ENCODE measurements at regions of chr19 and their contacts with region 1.

Region 1: GRCh38 chr19:36014029-36014924 is at the start of gene ALKBH6:
- DNase-seq: peak; percentile 98 to 99 (median 99)
- ATAC-seq: peak; percentile 98
- H3K4me3 ChIP-seq: peak within 1 kb of the TSS; percentile 73 to 80
- H3K4me3 Mint-ChIP-seq: peak within 1 kb of the TSS; percentile 91
- H3K27ac ChIP-seq: peak within 1 kb of the TSS; percentile 82 to 85
- H3K27ac Mint-ChIP-seq: peak within 1 kb of the TSS; percentile 91
- H3K4me1 ChIP-seq: peaks cover 23% of the 10 kb centered on the region
- H3K4me1 Mint-ChIP-seq: peaks cover 43% of the 10 kb centered on the region
- H3K27me3 ChIP-seq: no peaks in the 10 kb centered on the region
- H3K27me3 Mint-ChIP-seq: no peaks in the 10 kb centered on the region
- CTCF ChIP-seq: no peak
- total RNA-seq, gene ALKBH6: 28.8 to 34.1 TPM

Region 2: DNA sequence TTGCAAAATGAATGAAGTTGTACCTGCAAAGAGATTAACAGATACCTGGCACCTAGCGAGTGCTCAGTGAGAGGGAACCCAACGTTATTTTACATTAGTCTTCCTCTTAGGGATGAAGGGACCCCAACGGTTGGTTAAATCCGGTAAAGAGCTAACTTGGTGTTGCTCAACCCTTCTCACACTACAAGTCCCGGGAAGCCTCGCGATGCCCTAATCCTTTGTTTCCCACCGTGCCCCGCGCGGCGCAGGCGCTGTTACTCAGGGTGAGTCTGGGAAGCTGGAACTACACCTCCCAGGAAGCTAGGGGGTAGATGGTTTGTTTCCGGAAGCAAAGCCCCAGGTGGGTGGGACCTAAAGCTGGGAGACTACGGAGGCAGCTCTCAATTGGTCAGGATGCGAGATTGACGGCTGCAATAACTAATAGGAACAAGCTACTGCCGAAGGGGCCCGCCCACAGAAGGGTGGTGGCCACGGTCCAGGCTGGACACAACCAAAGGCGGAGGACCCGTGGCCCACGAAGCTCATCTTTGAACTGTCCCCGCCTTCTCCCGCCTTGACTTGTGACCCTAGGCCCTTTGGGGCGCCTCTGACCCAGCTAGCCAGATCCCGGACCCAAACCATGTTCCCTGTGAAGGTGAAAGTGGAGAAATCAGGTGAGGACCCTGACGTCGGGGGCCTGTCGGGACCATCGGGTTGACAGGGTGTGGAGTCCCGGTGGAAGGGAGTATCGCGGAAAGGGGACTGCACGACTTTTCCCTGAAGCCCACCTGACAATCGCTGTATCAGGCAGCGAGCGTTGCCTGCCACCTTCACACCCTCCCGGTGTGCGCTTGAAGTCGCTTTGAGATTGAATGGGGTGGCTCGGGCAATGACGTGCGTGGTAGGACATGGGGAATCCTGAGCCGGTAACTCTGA is 265.9 kb before region 1 on chr19 and contains the start of gene LIN37:
- CTCF ChIA-PET with region 1: no interaction called
- POLR2A ChIA-PET with region 1: no interaction called
- intact Hi-C with region 1: loop called in 1 of 2 experiments (anchors 2 kb)
- DNase-seq: peak; percentile 97 to 100 (median 98)
- ATAC-seq: peak; percentile 72
- H3K4me3 ChIP-seq: peak within 1 kb of the TSS; percentile 84 to 99
- H3K4me3 Mint-ChIP-seq: peak within 1 kb of the TSS; percentile 98
- H3K27ac ChIP-seq: peak within 1 kb of the TSS; percentile 71 to 84
- H3K27ac Mint-ChIP-seq: peak within 1 kb of the TSS; percentile 95
- H3K4me1 ChIP-seq: peaks cover 41% of the 10 kb centered on the region
- H3K4me1 Mint-ChIP-seq: peaks cover 44% of the 10 kb centered on the region
- H3K27me3 ChIP-seq: no peaks in the 10 kb centered on the region
- H3K27me3 Mint-ChIP-seq: no peaks in the 10 kb centered on the region
- CTCF ChIP-seq: no peak
- total RNA-seq, gene LIN37: 5.5 to 9.3 TPM

Region 3: DNA sequence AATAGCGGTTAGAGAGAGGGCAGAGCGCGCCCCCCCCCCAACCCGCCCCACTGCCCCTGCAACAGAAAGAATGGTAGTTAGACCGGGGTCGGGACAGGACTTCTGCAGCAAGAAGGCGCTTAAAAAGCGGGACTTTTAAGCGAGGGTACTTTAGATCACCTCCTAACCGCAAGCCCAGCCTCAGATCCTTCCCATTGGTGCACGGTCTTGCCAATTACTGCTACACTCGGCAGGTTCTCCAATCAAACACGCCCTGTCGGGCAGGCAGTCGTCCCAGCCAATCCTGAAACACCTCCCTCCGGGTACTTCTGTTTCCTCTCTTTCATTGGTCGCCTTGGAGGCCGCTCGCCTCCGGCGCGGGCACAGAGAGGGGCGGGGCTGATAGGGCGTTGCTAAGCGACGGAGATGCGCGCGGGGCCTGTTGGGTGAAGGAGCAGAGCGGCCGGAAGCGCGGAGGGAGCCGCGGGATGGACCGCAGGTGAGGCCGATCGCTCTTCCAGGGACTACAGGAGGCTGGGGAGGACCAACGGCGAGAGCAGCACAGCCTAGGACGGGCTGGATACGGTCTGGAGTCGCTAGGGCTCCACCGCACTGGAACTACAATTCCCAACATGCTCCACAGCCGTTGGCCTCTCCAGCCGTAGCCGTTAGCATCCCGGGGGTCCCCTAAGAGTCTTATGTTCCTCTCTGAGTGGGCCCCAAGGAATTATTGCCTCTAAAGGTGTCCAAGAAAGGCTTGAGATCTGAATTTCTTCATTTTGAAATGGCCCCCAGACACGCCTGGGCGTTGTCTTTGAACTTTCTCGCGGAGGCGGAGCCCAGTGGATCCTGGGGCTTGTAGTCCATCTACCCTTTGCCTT is 256.3 kb before region 1 on chr19 and contains the start of gene PROSER3:
- CTCF ChIA-PET with region 1: no interaction called
- POLR2A ChIA-PET with region 1: no interaction called
- intact Hi-C with region 1: loop called in 1 of 2 experiments (anchors 2 kb)
- DNase-seq: peak; percentile 96 to 99 (median 98)
- ATAC-seq: peak; percentile 95
- H3K4me3 ChIP-seq: peak within 1 kb of the TSS; percentile 98 to 100
- H3K4me3 Mint-ChIP-seq: peak within 1 kb of the TSS; percentile 96
- H3K27ac ChIP-seq: peak within 1 kb of the TSS; percentile 95 to 97
- H3K27ac Mint-ChIP-seq: peak within 1 kb of the TSS; percentile 97
- H3K4me1 ChIP-seq: peaks cover 25% of the 10 kb centered on the region
- H3K4me1 Mint-ChIP-seq: peaks cover 34% of the 10 kb centered on the region
- H3K27me3 ChIP-seq: no peaks in the 10 kb centered on the region
- H3K27me3 Mint-ChIP-seq: peaks cover 9% of the 10 kb centered on the region
- CTCF ChIP-seq: no peak
- total RNA-seq, gene PROSER3: 17.3 to 19.5 TPM

Region 4: DNA sequence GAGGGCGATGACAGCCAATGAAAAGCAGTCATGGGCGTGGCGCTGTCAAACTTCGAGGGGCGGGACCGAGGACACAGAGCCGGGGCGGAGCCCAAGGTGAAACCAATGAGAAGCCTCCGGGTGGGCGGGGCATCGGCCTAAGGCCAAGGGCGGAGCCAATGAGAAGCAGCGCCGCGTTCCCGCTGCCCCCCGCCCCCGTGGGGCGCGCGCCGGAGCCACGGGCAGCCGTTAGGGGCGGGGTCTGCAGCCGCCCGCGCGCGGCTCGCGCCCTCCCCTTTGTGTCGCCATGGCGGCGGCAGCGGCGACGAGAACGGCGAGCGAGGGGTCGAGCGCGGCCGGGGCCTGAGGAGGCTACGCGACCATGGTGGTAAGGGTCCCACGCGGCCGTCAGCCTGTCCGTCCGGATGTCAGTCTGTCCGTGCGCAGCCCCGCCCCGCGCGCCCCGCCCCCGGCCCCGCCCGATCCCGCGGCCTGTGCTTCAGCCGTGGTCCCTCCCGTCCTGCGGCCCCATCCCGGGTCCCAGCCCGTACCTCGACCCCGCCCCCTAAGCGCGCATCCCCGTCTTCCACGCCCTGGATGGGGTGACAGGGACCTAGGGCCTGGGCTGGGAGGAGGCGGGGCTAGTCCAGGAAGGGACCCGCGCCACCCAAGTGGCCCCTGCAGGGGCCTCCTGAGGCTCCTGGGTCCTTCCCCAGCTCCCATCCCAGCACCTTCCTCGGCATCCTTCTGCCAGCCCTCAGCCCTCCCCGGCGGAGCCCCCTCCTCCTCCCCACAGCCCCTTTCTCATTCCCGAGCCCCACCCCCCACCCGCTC is 238.8 kb before region 1 on chr19 and contains the start of gene ARHGAP33:
- CTCF ChIA-PET with region 1: no interaction called
- POLR2A ChIA-PET with region 1: no interaction called
- intact Hi-C with region 1: loop called (anchors 1 to 5 kb)
- DNase-seq: peak; percentile 94 to 99 (median 98)
- ATAC-seq: peak; percentile 99
- H3K4me3 ChIP-seq: peak within 1 kb of the TSS; percentile 54 to 60
- H3K4me3 Mint-ChIP-seq: peak within 1 kb of the TSS; percentile 84
- H3K27ac ChIP-seq: no peak within 1 kb of the TSS
- H3K27ac Mint-ChIP-seq: no peak within 1 kb of the TSS
- H3K4me1 ChIP-seq: peaks cover 12% of the 10 kb centered on the region
- H3K4me1 Mint-ChIP-seq: peaks cover 21% of the 10 kb centered on the region
- H3K27me3 ChIP-seq: no peaks in the 10 kb centered on the region
- H3K27me3 Mint-ChIP-seq: no peaks in the 10 kb centered on the region
- CTCF ChIP-seq: no peak
- total RNA-seq, gene ARHGAP33: 8.7 to 10.6 TPM

Region 5: DNA sequence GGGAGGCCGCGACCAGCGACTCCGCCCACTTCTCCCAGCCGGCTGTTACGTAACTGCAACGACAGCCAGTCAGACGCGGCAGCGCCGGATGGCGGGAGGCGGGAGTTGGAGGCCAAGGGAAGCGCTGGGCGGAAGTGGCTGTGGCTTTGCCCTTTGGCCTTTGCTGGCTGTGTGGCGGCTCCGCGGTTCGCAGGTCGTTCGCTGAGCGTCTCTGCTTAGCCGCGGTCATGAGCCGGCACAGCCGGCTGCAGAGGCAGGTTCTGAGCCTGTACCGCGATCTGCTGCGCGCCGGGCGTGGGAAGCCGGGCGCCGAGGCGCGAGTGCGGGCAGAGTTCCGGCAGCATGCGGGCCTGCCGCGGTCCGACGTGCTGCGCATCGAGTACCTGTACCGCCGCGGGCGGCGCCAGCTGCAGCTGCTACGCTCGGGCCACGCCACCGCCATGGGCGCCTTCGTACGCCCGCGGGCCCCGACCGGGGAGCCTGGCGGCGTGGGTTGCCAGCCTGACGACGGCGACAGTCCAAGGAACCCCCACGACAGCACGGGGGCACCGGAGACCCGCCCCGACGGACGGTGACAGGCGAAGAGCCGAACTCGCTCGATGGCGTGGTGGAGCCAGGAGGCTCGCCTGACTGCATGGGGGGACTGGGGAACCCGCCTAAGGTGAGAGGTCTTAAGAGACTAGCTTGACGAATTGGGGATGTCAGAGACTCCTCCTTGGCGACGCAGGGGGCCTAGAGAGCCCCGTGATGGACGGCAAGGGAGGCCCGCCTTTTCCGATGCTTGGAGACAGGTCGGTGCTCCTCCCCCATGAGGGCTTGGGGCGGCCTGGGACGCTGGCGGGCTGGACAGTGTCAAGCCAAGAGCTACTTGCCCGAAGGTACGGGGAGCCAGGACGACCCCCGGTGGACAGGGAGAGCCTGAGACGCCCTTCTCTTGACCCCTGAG is 19.0 kb before region 1 on chr19 and contains the start of gene SDHAF1:
- CTCF ChIA-PET with region 1: interaction called, 4 read pairs
- POLR2A ChIA-PET with region 1: interaction called, 11 read pairs
- intact Hi-C with region 1: loop called (anchors 1 kb)
- DNase-seq: peak; percentile 80 to 96 (median 92)
- ATAC-seq: peak; percentile 88
- H3K4me3 ChIP-seq: peak within 1 kb of the TSS; percentile 73 to 95
- H3K4me3 Mint-ChIP-seq: peak within 1 kb of the TSS; percentile 93
- H3K27ac ChIP-seq: peak within 1 kb of the TSS; percentile 55 to 69
- H3K27ac Mint-ChIP-seq: peak within 1 kb of the TSS; percentile 94
- H3K4me1 ChIP-seq: peaks cover 22% of the 10 kb centered on the region
- H3K4me1 Mint-ChIP-seq: peaks cover 35% of the 10 kb centered on the region
- H3K27me3 ChIP-seq: peaks cover 0 to 4% of the 10 kb centered on the region in 2 experiments
- H3K27me3 Mint-ChIP-seq: no peaks in the 10 kb centered on the region
- CTCF ChIP-seq: no peak
- total RNA-seq, gene SDHAF1: 7.3 TPM

Region 6: GRCh38 chr19:36054119-36054732 is 39.9 kb after region 1 on chr19 and contains the start of gene THAP8:
- CTCF ChIA-PET with region 1: no interaction called
- POLR2A ChIA-PET with region 1: interaction called, 4 read pairs
- intact Hi-C with region 1: loop called (anchors 1 kb)
- DNase-seq: peak; percentile 99 to 100 (median 100)
- ATAC-seq: peak; percentile 86
- H3K4me3 ChIP-seq: peak within 1 kb of the TSS; percentile 74 to 86
- H3K4me3 Mint-ChIP-seq: peak within 1 kb of the TSS; percentile 96
- H3K27ac ChIP-seq: peak within 1 kb of the TSS; percentile 95 to 96
- H3K27ac Mint-ChIP-seq: peak within 1 kb of the TSS; percentile 97
- H3K4me1 ChIP-seq: peaks cover 17% of the 10 kb centered on the region
- H3K4me1 Mint-ChIP-seq: peaks cover 27% of the 10 kb centered on the region
- H3K27me3 ChIP-seq: no peaks in the 10 kb centered on the region
- H3K27me3 Mint-ChIP-seq: no peaks in the 10 kb centered on the region
- CTCF ChIP-seq: peak; percentile 66
- total RNA-seq, gene THAP8: 0.31 to 0.57 TPM

Region 7: GRCh38 chr19:36139473-36140303 is 125.4 kb after region 1 on chr19 and contains the start of gene CAPNS1:
- CTCF ChIA-PET with region 1: no interaction called
- POLR2A ChIA-PET with region 1: no interaction called
- intact Hi-C with region 1: loop called in 1 of 2 experiments (anchors 1 kb)
- DNase-seq: peak; percentile 77 to 96 (median 92)
- ATAC-seq: peak; percentile 55
- H3K4me3 ChIP-seq: peak within 1 kb of the TSS; percentile 90 to 99
- H3K4me3 Mint-ChIP-seq: peak within 1 kb of the TSS; percentile 96
- H3K27ac ChIP-seq: peak within 1 kb of the TSS; percentile 83 to 90
- H3K27ac Mint-ChIP-seq: peak within 1 kb of the TSS; percentile 93
- H3K4me1 ChIP-seq: peaks cover 13% of the 10 kb centered on the region
- H3K4me1 Mint-ChIP-seq: peaks cover 14% of the 10 kb centered on the region
- H3K27me3 ChIP-seq: no peaks in the 10 kb centered on the region
- H3K27me3 Mint-ChIP-seq: no peaks in the 10 kb centered on the region
- CTCF ChIP-seq: peak; percentile 26
- total RNA-seq, gene CAPNS1: 141 to 146 TPM

Measured in CD8-positive, alpha-beta T cell (primary cell).